HEK293 (cell line): ENCODE measurements at regions of chr5 and their contacts with region 1.

Region 1: DNA sequence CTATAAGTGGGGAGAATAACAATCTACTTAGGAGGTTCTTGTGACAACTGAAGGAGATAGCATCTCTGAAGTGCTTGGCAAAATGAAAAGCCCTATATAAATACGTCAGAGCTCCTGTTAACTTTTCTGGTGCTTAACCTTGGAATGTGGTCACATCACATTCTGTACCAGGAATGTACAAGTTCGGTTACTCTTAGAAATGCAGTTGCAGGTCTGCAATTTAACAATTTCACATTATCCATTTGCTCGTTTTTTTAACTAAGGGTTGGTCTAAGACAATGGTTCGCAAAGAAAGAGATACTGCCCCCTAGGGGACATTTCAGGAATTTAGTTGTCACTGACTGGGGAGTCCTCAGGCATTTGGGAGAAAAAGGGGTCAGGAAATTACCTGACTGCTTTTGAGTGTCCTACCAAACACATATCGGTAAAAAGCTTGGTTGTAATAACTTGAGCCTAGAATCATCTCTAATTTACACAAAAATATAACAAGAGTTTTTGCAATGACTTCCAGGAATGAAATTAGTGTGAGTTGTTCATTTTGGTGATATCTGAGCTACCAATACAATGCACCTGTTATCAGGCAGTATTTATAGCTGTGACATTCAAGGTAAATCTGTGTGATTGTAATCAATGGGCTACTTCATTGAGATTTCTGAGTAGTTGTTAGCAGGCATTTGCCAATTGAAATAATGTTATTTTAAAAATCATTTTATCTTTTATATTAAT is 5.4 kb upstream of the HBEGF start:
- H3K4me3 ChIP-seq: no peak overlapping the region
- H3K27ac ChIP-seq: no peak overlapping the region
- H3K4me1 ChIP-seq: no peaks in the 10 kb centered on the region
- CTCF ChIP-seq: 0 out of 2 replicates have a peak, but pooled peaks have one; percentile 34

Region 2: DNA sequence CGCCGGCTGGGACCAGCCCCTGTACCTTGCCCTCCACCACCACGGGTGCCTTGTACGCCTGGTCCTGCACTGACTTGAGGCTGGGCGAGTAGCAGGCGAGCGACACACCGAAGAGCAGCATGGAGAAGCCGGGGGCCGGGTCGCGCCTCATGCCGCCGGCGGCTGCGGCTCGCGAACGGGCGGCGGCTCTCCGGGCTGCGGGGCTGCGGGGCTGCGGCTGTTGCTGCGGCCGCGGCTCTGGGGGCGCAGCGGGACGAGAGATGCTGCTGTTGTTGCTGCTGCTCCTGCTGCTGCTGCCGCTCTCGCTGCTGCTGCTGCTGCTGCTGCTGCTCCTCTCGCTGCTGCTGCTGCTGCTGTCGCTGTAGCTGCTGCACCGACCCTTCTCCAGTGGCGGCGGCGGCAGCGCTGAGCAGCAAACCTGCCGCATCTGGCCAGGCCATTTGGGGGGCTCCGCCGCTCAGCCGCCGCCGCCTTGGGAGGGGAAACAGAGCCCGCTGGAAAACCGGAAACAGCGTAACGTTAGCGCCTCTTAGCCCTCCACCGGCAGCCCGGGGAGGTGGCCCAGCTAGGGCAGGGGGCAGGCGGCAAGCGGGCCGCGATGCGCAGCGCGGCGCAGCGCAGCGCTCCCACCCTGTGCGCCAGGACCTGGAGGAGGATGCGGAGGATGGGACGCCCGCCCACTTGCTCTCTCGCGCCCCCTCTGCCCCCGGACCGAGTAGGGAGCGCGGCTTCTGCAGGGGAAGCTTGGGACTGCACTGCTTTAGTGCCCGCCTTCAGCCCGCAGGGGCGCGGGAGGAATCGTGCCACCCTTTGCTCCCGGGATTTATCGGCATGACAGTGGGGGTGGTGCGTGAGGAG is 308.9 kb before region 1 on chr5 and contains the start of gene NRG2:
- CTCF ChIA-PET with region 1: no interaction called
- POLR2A ChIA-PET with region 1: no interaction called
- H3K4me3 ChIP-seq: peak within 1 kb of the TSS; percentile 70
- H3K27ac ChIP-seq: peak within 1 kb of the TSS; percentile 79; the same call in 1 of the 2 replicates
- H3K4me1 ChIP-seq: peaks cover 19% of the 10 kb centered on the region
- CTCF ChIP-seq: peak; percentile 100

Region 3: GRCh38 chr5:140213370-140213983 is 138.3 kb before region 1 on chr5:
- CTCF ChIA-PET with region 1: interaction called, 10 read pairs
- POLR2A ChIA-PET with region 1: interaction called, 4 read pairs
- H3K4me3 ChIP-seq: no peak overlapping the region
- H3K27ac ChIP-seq: no peak overlapping the region
- H3K4me1 ChIP-seq: no peaks in the 10 kb centered on the region
- CTCF ChIP-seq: no peak

Region 4: GRCh38 chr5:140253947-140254346 is 97.8 kb before region 1 on chr5:
- CTCF ChIA-PET with region 1: interaction called, 660 read pairs
- POLR2A ChIA-PET with region 1: interaction called, 8 read pairs
- H3K4me3 ChIP-seq: no peak overlapping the region
- H3K27ac ChIP-seq: no peak overlapping the region
- H3K4me1 ChIP-seq: no peaks in the 10 kb centered on the region
- CTCF ChIP-seq: no peak

Region 5: GRCh38 chr5:140295414-140295813 is 56.4 kb before region 1 on chr5:
- CTCF ChIA-PET with region 1: interaction called, 12 read pairs
- POLR2A ChIA-PET with region 1: interaction called, 22 read pairs
- H3K4me3 ChIP-seq: no peak overlapping the region
- H3K27ac ChIP-seq: no peak overlapping the region
- H3K4me1 ChIP-seq: peaks cover 47% of the 10 kb centered on the region
- CTCF ChIP-seq: no peak

Region 6: DNA sequence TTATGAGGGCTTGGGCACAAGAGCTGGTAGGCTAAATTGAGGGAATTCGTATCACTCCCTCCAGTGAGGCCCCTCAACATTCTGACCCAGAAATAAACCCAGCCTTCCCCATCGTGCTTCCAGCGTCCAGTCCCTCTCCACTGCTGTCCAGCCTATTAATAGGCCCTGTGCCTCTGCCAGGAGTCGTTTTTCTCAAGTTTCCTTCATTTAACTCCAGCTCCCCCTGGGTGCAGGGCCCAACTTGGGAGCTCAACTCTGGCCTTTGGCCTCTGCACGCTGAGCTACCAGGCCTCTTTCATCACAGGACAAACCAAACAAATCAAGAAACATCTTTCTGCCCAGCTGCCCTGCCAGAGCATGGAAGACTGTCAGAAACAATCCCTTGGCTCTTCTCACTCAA is 15.4 kb before region 1 on chr5:
- CTCF ChIA-PET with region 1: interaction called, 26 read pairs
- POLR2A ChIA-PET with region 1: interaction called, 5 read pairs
- H3K4me3 ChIP-seq: no peak overlapping the region
- H3K27ac ChIP-seq: no peak overlapping the region
- H3K4me1 ChIP-seq: no peaks in the 10 kb centered on the region
- CTCF ChIP-seq: no peak

Region 7: GRCh38 chr5:140718241-140718580 is 366.4 kb after region 1 on chr5:
- CTCF ChIA-PET with region 1: interaction called, 10 read pairs
- POLR2A ChIA-PET with region 1: interaction called, 14 read pairs
- H3K4me3 ChIP-seq: peak overlapping the region; percentile 45
- H3K27ac ChIP-seq: no peak overlapping the region; the same call in 1 of the 2 replicates
- H3K4me1 ChIP-seq: no peaks in the 10 kb centered on the region
- CTCF ChIP-seq: no peak